Panc1 (cell line): ENCODE measurements at regions of chr16 and their contacts with region 1.

Region 1: GRCh38 chr16:22190776-22191531 is 15.1 kb upstream of the EEF2K start:
- DNase-seq: peak; percentile 99
- ATAC-seq: peak; percentile 84
- H3K4me3 ChIP-seq: peak overlapping the region; percentile 65 to 77
- H3K27ac ChIP-seq: peak overlapping the region; percentile 72
- H3K4me1 ChIP-seq: peaks cover 26% of the 10 kb centered on the region
- H3K27me3 ChIP-seq: no peaks in the 10 kb centered on the region
- CTCF ChIP-seq: no peak

Region 2: GRCh38 chr16:21959050-21959449 is 231.9 kb before region 1 on chr16:
- CTCF ChIA-PET with region 1: no interaction called
- POLR2A ChIA-PET with region 1: interaction called, 11 read pairs
- in situ Hi-C with region 1: no loop called
- intact Hi-C with region 1: no loop called
- DNase-seq: no peak
- ATAC-seq: no peak
- H3K4me3 ChIP-seq: no peak overlapping the region
- H3K27ac ChIP-seq: no peak overlapping the region
- H3K4me1 ChIP-seq: peaks cover 7% of the 10 kb centered on the region; the same call in 1 of the 2 replicates
- H3K27me3 ChIP-seq: no peaks in the 10 kb centered on the region
- CTCF ChIP-seq: no peak

Region 3: GRCh38 chr16:22014271-22014873 is 176.6 kb before region 1 on chr16:
- CTCF ChIA-PET with region 1: interaction called, 11 read pairs
- POLR2A ChIA-PET with region 1: no interaction called
- in situ Hi-C with region 1: no loop called
- intact Hi-C with region 1: no loop called
- DNase-seq: no peak
- ATAC-seq: no peak
- H3K4me3 ChIP-seq: no peak overlapping the region
- H3K27ac ChIP-seq: no peak overlapping the region
- H3K4me1 ChIP-seq: peaks cover 32% of the 10 kb centered on the region
- H3K27me3 ChIP-seq: no peaks in the 10 kb centered on the region
- CTCF ChIP-seq: no peak

Region 4: DNA sequence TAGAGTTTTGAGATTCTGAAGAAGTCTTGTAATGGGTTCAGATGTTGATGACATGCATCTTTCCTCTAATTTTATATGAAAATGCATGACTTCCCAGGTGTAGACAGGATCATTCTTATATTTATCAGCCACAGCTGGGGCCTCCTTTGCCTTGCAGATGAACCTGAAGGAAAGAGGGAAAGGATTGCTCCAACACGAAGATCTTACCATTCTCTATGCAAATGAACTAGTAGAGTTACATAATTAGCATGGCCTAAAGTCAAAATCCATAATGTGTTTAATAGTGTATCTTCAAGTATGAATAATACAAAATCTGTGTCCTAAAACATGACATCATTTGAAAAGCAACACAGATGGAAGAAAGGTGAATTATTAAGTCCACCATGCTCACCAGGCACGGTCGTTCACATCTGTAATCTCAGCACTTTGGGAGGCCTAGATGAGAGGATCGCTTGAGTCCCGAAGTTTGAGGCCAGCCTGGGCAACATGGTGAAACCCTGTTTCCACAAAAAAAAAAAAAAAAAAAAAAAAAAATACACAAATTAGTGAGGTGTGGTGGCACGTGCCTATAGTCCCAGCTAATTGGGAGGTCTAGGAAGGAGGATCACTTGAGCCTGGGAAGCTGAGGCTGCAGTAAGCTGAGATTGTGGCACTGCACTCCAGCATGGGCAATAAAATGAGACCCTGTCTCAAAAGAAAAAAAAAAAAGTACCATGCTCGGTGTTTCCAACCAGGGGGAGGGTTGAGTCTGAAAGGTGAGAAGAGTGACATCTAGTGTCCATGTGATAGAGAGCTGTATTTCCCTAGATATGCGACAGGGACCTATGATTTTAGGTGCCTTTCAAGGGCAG is 92.3 kb before region 1 on chr16:
- CTCF ChIA-PET with region 1: interaction called, 5 read pairs
- POLR2A ChIA-PET with region 1: interaction called, 3 read pairs
- in situ Hi-C with region 1: loop called (anchors 25 kb)
- intact Hi-C with region 1: loop called (anchors 5 kb)
- DNase-seq: peak; percentile 41
- ATAC-seq: peak; percentile 95
- H3K4me3 ChIP-seq: peak overlapping the region in 1 of 2 experiments; percentile 44; a peak in 2 of 4 replicates
- H3K27ac ChIP-seq: no peak overlapping the region
- H3K4me1 ChIP-seq: no peaks in the 10 kb centered on the region
- H3K27me3 ChIP-seq: no peaks in the 10 kb centered on the region
- CTCF ChIP-seq: peak; percentile 85

Region 5: GRCh38 chr16:22217889-22218730 is 27.2 kb after region 1 on chr16:
- CTCF ChIA-PET with region 1: no interaction called
- POLR2A ChIA-PET with region 1: no interaction called
- in situ Hi-C with region 1: no loop called
- intact Hi-C with region 1: no loop called
- DNase-seq: no peak
- ATAC-seq: no peak
- H3K4me3 ChIP-seq: no peak overlapping the region
- H3K27ac ChIP-seq: no peak overlapping the region
- H3K4me1 ChIP-seq: no peaks in the 10 kb centered on the region
- H3K27me3 ChIP-seq: no peaks in the 10 kb centered on the region
- CTCF ChIP-seq: no peak

Region 6: DNA sequence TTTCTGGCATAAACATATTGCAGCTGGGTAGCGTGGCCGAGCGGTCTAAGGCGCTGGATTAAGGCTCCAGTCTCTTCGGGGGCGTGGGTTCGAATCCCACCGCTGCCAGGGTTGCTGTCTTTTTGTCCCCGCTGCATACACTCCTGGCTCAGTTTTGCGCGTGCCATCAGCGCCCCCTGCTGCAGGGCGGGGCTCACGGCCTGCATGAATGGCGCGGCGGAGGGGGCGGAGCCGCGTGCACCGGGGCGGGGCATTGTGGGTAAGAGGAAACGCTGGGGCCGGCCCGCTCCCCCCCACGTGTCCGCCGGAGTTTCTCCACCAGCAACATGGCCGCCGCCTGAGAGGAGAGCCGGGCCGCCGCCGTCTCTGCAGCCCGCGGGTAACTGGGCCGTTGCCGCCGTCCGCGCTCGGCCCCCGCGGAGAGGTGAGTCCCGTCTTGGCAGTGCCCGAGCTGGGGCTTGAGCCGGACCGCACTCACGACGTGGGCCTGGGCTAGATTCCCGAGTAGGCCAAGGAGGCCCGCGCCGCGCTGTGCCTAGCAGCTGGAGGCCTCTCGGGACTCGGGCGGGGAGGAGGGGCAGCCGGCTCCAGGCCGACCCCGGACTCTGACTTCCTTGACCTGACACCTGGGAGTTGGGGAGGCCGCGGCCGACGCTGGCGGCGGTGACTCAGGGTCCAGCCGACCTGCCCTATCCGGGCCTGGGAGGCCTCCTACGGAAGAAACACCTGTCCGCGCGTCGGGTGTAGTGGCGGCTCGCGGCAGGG is 106.3 kb after region 1 on chr16 and contains the start of gene POLR3E:
- CTCF ChIA-PET with region 1: interaction called, 3 read pairs
- POLR2A ChIA-PET with region 1: no interaction called
- in situ Hi-C with region 1: no loop called
- intact Hi-C with region 1: loop called (anchors 5 kb)
- DNase-seq: peak; percentile 94
- ATAC-seq: peak; percentile 90
- H3K4me3 ChIP-seq: peak within 1 kb of the TSS; percentile 87 to 92
- H3K27ac ChIP-seq: peak within 1 kb of the TSS; percentile 76
- H3K4me1 ChIP-seq: peaks cover 3% of the 10 kb centered on the region; the same call in 1 of the 2 replicates
- H3K27me3 ChIP-seq: no peaks in the 10 kb centered on the region
- CTCF ChIP-seq: peak; percentile 94
- total RNA-seq, gene POLR3E: 45.2 TPM

Region 7: GRCh38 chr16:22763437-22764080 is 572.6 kb after region 1 on chr16:
- CTCF ChIA-PET with region 1: no interaction called
- POLR2A ChIA-PET with region 1: interaction called, 10 read pairs
- in situ Hi-C with region 1: no loop called
- intact Hi-C with region 1: no loop called
- DNase-seq: no peak
- ATAC-seq: no peak
- H3K4me3 ChIP-seq: no peak overlapping the region
- H3K27ac ChIP-seq: no peak overlapping the region
- H3K4me1 ChIP-seq: no peaks in the 10 kb centered on the region
- H3K27me3 ChIP-seq: peaks cover 2% of the 10 kb centered on the region; the same call in 1 of the 2 replicates
- CTCF ChIP-seq: no peak